ENCODE measurements at regions of chr15 and their contacts with region 1.

Region 1: DNA sequence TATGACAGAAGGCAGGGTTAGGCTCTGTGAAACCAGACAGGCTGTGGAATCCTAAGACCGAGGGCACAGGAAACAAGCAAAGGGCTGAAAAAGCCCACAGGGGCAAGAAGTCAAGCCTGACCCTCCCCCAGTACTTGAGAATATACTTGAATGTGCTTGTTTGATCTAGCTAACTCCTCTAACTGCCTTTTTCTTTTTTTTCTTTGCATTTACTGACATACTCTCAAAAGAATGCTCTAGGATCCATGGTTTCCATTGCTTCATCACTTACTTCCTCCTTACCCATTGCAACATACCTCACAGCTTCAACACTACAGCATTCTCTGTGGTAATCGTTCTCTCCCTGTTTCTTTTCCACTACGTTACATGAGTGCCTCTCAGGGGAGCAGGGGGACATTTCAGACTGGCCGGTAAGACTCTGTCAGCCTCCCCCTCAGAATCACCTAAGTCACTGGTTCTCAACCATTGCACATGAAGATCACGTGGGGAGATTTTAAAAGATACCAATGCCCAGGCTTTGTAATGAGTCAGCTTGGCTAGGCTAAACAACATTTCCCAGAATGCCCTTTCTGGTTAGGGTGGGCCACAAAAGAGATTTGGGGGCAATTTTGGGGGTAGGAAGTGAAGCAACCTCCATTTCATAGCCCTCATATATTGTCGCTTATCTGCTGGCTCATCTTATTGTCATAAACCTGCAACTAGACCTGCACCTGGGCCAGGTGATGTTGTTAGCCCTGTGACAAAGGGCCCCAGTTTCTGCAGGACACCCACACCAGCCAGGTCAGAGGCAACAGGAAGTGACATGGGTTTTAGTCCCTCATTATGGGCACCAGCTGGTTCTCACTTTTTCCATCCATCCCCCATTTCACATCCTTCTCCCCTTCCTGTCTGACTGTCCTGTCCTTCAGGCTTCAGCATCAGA is 24.6 kb upstream of the RSL24D1 start:
- DNase-seq: peak; percentile 51 to 81 (median 77)
- H3K4me3 ChIP-seq: peak overlapping the region in 2 of 7 experiments; percentile 37 to 46
- H3K27ac ChIP-seq: no peak overlapping the region
- H3K4me1 ChIP-seq: peaks cover 34 to 72% (median 42%) of the 10 kb centered on the region in 4 experiments
- H3K27me3 ChIP-seq: no peaks in the 10 kb centered on the region

Region 2: GRCh38 chr15:55183679-55184078 is 37.7 kb before region 1 on chr15:
- CTCF ChIA-PET with region 1: no interaction called
- POLR2A ChIA-PET with region 1: no interaction called
- DNase-seq: no peak
- H3K4me3 ChIP-seq: no peak overlapping the region
- H3K27ac ChIP-seq: no peak overlapping the region
- H3K4me1 ChIP-seq: no peaks in the 10 kb centered on the region
- H3K27me3 ChIP-seq: no peaks in the 10 kb centered on the region

Region 3: DNA sequence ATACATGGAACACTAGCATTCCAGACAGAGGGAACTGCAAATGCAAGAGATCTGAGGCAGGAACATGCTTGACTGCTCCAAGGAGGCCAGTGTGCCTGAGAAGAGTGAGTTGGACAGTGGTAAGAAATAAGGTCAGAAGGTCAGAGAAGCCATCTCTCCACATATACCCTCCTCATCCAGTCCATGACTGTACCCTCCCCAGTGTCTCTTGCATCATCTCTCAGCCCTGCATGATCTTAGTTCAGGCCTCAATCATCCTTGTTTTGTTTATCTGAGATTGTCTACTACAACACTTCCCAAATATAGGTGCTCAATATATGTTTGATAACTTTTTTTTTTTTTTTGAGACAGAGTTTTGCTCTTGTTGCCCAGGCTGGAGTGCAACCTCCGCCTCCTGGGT is 19.1 kb before region 1 on chr15:
- CTCF ChIA-PET with region 1: interaction called, 10 read pairs
- POLR2A ChIA-PET with region 1: no interaction called
- DNase-seq: no peak
- H3K4me3 ChIP-seq: no peak overlapping the region
- H3K27ac ChIP-seq: no peak overlapping the region
- H3K4me1 ChIP-seq: peaks cover 0 to 10% (median 8%) of the 10 kb centered on the region in 4 experiments
- H3K27me3 ChIP-seq: no peaks in the 10 kb centered on the region

Region 4: DNA sequence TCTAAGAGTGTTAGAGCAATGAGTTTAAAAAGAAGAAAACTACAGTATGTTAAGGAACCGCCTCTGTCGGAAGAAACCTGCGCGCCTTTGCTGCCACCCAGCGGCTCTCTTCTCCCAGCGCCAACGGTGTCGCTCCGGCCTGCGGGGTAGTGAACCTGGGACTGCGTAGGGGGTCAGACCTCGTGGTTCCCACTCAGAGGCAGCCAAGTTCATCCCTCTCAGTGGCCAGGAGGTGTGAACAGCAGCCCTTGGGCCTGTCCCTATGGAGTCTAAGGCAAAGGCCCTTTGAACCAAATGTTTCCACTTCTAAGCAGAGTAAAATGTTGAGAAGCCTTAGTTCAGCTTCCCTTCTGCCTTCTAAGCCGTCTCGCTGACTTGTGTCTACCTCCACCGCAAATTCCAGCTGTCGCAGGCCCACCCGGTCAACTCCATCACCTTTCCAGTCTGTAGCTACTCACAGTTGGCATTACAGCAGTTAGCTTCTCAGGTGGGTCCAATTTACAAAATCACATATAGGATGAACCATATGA is 69.2 kb after region 1 on chr15:
- CTCF ChIA-PET with region 1: interaction called, 54 read pairs
- POLR2A ChIA-PET with region 1: interaction called, 3 read pairs
- DNase-seq: peak; percentile 86 to 88 (median 87)
- H3K4me3 ChIP-seq: peak overlapping the region in 6 of 7 experiments; percentile 85 to 97 (median 88)
- H3K27ac ChIP-seq: peak overlapping the region; percentile 25 to 79
- H3K4me1 ChIP-seq: peaks cover 0 to 22% (median 10%) of the 10 kb centered on the region in 4 experiments
- H3K27me3 ChIP-seq: no peaks in the 10 kb centered on the region

Measured in common myeloid progenitor, CD34-positive (primary cell).